Activated naive CD4-positive, alpha-beta T cell treated with anti-CD3 and anti-CD28 coated beads, Interleukin-2, amount 10 ng/mL, durations not matched to agents 7 days and 5 days (primary cell): ENCODE measurements at regions of chr16 and their contacts with region 1.

Region 1: GRCh38 chr16:84738255-84739038 is 38.6 kb downstream of the USP10 start:
- DNase-seq: peak; percentile 85
- H3K4me3 Mint-ChIP-seq: no peak overlapping the region
- H3K27ac Mint-ChIP-seq: peak overlapping the region; percentile 15
- H3K4me1 Mint-ChIP-seq: peaks cover 60% of the 10 kb centered on the region
- H3K27me3 Mint-ChIP-seq: no peaks in the 10 kb centered on the region

Region 2: GRCh38 chr16:84511180-84511824 is 227.1 kb before region 1 on chr16:
- CTCF ChIA-PET with region 1: interaction called, 15 read pairs
- DNase-seq: peak; percentile 80
- H3K4me3 Mint-ChIP-seq: no peak overlapping the region
- H3K27ac Mint-ChIP-seq: peak overlapping the region; percentile 87
- H3K4me1 Mint-ChIP-seq: peaks cover 92% of the 10 kb centered on the region
- H3K27me3 Mint-ChIP-seq: peaks cover 7% of the 10 kb centered on the region

Region 3: GRCh38 chr16:84672276-84673202 is 65.9 kb before region 1 on chr16:
- CTCF ChIA-PET with region 1: interaction called, 29 read pairs
- DNase-seq: peak; percentile 88
- H3K4me3 Mint-ChIP-seq: no peak overlapping the region
- H3K27ac Mint-ChIP-seq: no peak overlapping the region
- H3K4me1 Mint-ChIP-seq: peaks cover 7% of the 10 kb centered on the region
- H3K27me3 Mint-ChIP-seq: peaks cover 30% of the 10 kb centered on the region

Region 4: DNA sequence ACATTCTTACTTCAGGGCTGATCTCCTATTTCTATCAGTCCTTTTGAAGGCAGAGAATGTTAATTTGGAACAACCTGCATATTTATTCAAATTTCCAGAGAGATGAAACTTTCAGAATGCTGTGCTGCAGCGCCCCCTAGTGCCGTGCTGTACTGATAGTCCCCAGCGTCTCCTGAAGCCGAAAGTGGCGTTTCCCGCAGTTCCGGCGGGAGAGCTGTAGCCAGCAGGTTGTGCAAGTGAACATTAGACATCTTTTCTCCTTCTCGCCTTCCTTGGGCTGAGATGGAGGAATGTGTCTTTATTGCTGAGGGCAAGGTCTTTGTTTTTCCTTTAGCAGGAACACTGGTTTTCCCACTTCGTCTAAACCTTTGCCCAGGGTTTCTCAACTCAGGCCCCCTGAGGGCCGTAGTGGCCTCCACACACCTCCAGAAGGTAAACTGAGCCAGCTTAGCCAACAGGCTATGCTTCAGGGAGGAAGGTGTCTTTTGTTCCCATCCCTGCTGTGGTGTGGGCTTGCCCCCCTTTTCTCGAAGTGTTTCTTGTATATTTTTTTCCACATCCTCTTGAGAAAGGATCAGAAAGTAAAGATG is 12.3 kb before region 1 on chr16:
- CTCF ChIA-PET with region 1: interaction called, 47 read pairs
- DNase-seq: peak; percentile 90
- H3K4me3 Mint-ChIP-seq: no peak overlapping the region
- H3K27ac Mint-ChIP-seq: no peak overlapping the region
- H3K4me1 Mint-ChIP-seq: peaks cover 65% of the 10 kb centered on the region
- H3K27me3 Mint-ChIP-seq: no peaks in the 10 kb centered on the region

Region 5: GRCh38 chr16:84952335-84953189 is 214.1 kb after region 1 on chr16:
- CTCF ChIA-PET with region 1: interaction called, 11 read pairs
- DNase-seq: peak; percentile 79
- H3K4me3 Mint-ChIP-seq: no peak overlapping the region
- H3K27ac Mint-ChIP-seq: no peak overlapping the region
- H3K4me1 Mint-ChIP-seq: no peaks in the 10 kb centered on the region
- H3K27me3 Mint-ChIP-seq: peaks cover 36% of the 10 kb centered on the region

Region 6: GRCh38 chr16:85046931-85047866 is 308.8 kb after region 1 on chr16:
- CTCF ChIA-PET with region 1: no interaction called
- DNase-seq: peak; percentile 53
- H3K4me3 Mint-ChIP-seq: peak overlapping the region; percentile 24
- H3K27ac Mint-ChIP-seq: peak overlapping the region; percentile 77
- H3K4me1 Mint-ChIP-seq: peaks cover 20% of the 10 kb centered on the region
- H3K27me3 Mint-ChIP-seq: peaks cover 12% of the 10 kb centered on the region